K562 (cell line): ENCODE measurements at regions of chr1 and their contacts with region 1.

Region 1: GRCh38 chr1:248886237-248886895 is 19.7 kb upstream of the PGBD2 start:
- DNase-seq: peak in 1 of 4 experiments; percentile 51
- ATAC-seq: no peak
- H3K4me3 ChIP-seq: no peak overlapping the region
- H3K27ac ChIP-seq: peak overlapping the region; percentile 51
- H3K4me1 ChIP-seq: peaks cover 23 to 56% of the 10 kb centered on the region in 2 experiments
- H3K27me3 ChIP-seq: no peaks in the 10 kb centered on the region
- CTCF ChIP-seq: no peak
- EP300 ChIP-seq: no peak
- POLR2A ChIP-seq: no peak
- RAD21 ChIP-seq: no peak

Region 2: GRCh38 chr1:248807067-248807737 is 79.2 kb before region 1 on chr1:
- CTCF ChIA-PET with region 1: no interaction called
- POLR2A ChIA-PET with region 1: no interaction called
- in situ Hi-C with region 1: no loop called
- intact Hi-C with region 1: no loop called
- DNase-seq: peak; percentile 70 to 77 (median 74)
- ATAC-seq: peak; percentile 95
- H3K4me3 ChIP-seq: no peak overlapping the region
- H3K27ac ChIP-seq: no peak overlapping the region
- H3K4me1 ChIP-seq: peaks cover 11 to 15% of the 10 kb centered on the region in 2 experiments; a peak in 3 of 5 replicates
- H3K27me3 ChIP-seq: peaks cover 0 to 10% of the 10 kb centered on the region in 2 experiments; a peak in 2 of 5 replicates
- CTCF ChIP-seq: peak; percentile 88 to 94 (median 92)
- EP300 ChIP-seq: no peak
- POLR2A ChIP-seq: no peak
- RAD21 ChIP-seq: peak; percentile 96 to 98

Region 3: DNA sequence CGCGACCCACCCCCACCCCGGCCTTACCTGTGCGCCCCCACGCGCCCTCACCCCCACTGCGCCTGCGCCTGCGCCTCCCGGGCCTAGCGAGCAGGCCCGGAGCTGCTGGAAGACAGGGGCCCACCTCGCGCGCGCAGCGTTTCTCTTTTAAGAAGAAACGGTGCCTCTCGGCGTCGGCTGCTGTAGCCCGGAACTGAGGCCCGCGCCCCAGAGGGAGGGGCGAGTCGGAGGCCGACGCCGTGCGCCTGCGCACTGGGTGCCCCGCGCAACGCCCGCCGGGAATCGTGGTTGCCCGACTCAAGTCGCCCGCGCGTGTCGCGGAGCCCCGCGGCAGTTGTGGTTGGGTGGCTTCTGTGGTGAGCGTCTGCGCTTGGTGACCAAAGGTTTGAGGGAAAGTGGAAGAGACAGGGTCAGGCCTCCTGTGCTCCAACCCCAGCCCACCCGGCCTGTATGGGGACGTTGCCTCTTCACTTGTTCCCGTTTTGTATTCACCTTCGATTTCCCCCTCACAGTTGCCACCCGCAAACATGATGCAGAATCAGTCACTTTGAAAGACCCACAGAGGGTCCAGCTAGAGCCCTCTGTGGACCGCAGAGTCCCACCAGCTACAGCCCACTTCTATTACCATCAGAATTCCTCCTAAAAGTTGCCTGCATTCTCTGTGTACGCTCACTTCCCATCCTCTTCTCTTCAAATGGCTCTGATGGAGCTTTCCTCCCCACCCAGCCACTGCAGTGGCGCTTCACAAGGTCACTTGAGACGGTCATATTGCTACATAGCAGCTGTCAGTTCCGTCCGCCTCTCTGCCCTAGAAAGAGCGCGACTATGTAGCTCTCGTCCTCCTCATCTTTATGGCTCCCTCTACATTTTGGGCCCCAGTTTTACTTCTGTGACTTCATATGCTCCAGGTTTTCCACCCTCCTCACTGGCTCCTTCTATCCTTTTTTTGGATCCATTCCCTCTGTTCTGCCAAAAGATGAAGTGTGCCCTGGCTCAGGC is 27.2 kb before region 1 on chr1 and contains the start of gene ZNF692:
- CTCF ChIA-PET with region 1: interaction called, 3 read pairs
- POLR2A ChIA-PET with region 1: interaction called, 4 read pairs
- in situ Hi-C with region 1: no loop called
- intact Hi-C with region 1: loop called (anchors 2 kb)
- DNase-seq: peak; percentile 94 to 99 (median 96)
- ATAC-seq: peak; percentile 86
- H3K4me3 ChIP-seq: peak within 1 kb of the TSS; percentile 66
- H3K27ac ChIP-seq: peak within 1 kb of the TSS; percentile 99
- H3K4me1 ChIP-seq: peaks cover 47 to 50% of the 10 kb centered on the region in 2 experiments
- H3K27me3 ChIP-seq: no peaks in the 10 kb centered on the region
- CTCF ChIP-seq: no peak
- EP300 ChIP-seq: peak; percentile 4; the same call in 1 of the 2 replicates
- POLR2A ChIP-seq: peak; percentile 97
- RAD21 ChIP-seq: no peak
- polyA plus RNA-seq, gene ZNF692: 8.4 to 10.5 TPM